BJ (cell line): ENCODE measurements at regions of chr22 and their contacts with region 1.

Region 1: GRCh38 chr22:28783786-28784671 is 11.5 kb downstream of the CCDC117 start:
- DNase-seq: no peak
- H3K4me3 ChIP-seq: no peak overlapping the region
- H3K27me3 ChIP-seq: no peaks in the 10 kb centered on the region
- CTCF ChIP-seq: no peak

Region 2: DNA sequence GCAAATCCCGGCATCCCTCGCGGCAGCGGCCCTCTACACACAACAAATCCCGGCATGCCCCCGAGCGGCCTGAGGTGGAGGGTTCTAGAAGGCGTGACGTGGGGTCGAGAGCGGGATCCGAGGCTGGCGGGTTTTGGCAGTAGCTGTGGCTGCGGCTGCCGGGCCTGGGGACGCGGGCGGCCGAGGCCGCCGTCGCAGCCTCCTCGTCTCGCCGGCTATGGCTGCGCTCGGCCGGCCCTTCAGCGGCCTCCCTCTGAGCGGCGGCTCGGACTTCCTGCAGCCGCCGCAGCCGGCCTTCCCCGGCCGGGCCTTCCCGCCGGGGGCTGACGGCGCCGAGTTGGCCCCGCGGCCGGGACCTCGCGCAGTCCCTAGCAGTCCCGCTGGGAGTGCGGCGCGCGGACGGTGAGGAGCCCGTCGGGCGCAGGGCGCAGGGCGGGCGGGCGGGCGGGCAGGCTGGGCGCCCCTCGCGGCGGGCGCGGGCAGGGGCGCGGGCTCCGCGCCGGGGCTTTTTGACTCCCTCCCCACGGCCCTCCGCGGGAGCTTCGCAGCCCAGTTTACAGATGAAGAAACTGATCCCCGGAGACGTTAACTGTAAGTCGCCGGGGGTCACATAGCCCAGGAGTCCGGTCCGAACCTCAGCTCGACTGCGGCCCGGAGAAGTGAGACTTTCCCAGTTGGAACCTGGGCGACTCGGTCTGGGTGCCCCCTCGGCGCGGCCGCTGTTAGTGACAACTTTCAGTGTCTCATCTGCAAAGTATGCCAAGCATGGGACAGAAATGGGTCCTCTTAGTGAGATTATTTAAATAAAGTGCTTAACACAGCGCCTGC is 11.2 kb before region 1 on chr22 and contains the start of gene CCDC117:
- CTCF ChIA-PET with region 1: interaction called, 6 read pairs
- POLR2A ChIA-PET with region 1: interaction called, 18 read pairs
- DNase-seq: peak; percentile 75
- H3K4me3 ChIP-seq: peak within 1 kb of the TSS; percentile 65
- H3K27me3 ChIP-seq: no peaks in the 10 kb centered on the region
- CTCF ChIP-seq: 0 out of 2 replicates have a peak, but pooled peaks have one; percentile 21
- polyA plus RNA-seq, gene CCDC117: 4.5 and 11.5 TPM in 2 replicates